ENCODE measurements at regions of chrX and their contacts with region 1.

Region 1: DNA sequence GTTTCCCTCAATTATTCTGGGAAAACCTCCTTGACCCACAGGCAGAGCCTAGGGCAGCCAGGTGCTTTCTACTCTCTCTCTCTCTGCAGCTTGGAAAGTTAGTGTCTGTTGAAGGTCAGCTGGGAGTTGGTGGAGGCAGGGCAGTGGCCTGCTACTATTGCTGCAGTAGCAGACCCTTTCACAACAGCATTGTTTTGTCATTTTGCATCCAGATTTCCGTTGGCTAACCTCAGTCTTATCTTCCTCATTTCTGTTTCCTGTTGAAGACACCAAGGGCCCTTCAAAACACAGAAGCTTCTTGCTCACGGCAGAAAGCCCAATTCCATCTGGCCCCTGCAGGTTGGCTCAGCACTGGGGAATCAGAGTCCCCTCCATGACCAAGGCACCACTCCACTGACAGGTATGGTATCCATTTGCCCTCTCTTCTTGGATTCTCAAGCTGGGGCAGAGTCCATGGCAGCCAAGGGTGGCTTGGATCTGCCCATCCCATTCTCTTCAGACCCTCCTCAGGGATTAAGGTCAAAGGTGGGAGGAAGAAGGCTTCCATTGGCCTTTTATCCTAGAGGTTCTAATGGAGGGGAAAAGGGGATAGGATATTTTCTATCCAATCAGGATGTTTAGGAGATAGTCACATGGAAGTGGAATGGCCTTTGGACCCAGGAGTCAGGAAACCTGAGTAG is 24.6 kb downstream of the VSIG4 start:
- DNase-seq: peak; percentile 18
- CTCF ChIP-seq: no peak

Region 2: GRCh38 chrX:65985922-65986588 is 29.2 kb before region 1 on chrX:
- CTCF ChIA-PET with region 1: interaction called, 10 read pairs
- POLR2A ChIA-PET with region 1: no interaction called
- DNase-seq: peak; percentile 28
- CTCF ChIP-seq: peak; percentile 17